ENCODE measurements at regions of chr7 and their contacts with region 1.

Region 1: GRCh38 chr7:115679976-115680375 is 350.6 kb downstream of the TFEC start:
- DNase-seq: peak; percentile 45
- H3K4me3 ChIP-seq: no peak overlapping the region
- H3K27ac ChIP-seq: no peak overlapping the region
- H3K4me1 ChIP-seq: no peaks in the 10 kb centered on the region
- H3K27me3 ChIP-seq: no peaks in the 10 kb centered on the region
- CTCF ChIP-seq: peak; percentile 19 to 55
- POLR2A ChIP-seq: no peak

Region 2: GRCh38 chr7:114026486-114027089 is 1653.4 kb before region 1 on chr7:
- CTCF ChIA-PET with region 1: interaction called, 8 read pairs
- POLR2A ChIA-PET with region 1: no interaction called
- dilution Hi-C with region 1: no loop called
- intact Hi-C with region 1: loop called (anchors 5 kb)
- DNase-seq: peak; percentile 64
- H3K4me3 ChIP-seq: no peak overlapping the region
- H3K27ac ChIP-seq: no peak overlapping the region
- H3K4me1 ChIP-seq: no peaks in the 10 kb centered on the region
- H3K27me3 ChIP-seq: no peaks in the 10 kb centered on the region
- CTCF ChIP-seq: peak; percentile 24 to 36
- POLR2A ChIP-seq: no peak

Region 3: GRCh38 chr7:115356139-115356746 is 323.7 kb before region 1 on chr7:
- CTCF ChIA-PET with region 1: interaction called, 4 read pairs
- POLR2A ChIA-PET with region 1: no interaction called
- dilution Hi-C with region 1: no loop called
- intact Hi-C with region 1: loop called (anchors 5 kb)
- DNase-seq: peak; percentile 16
- H3K4me3 ChIP-seq: no peak overlapping the region
- H3K27ac ChIP-seq: no peak overlapping the region
- H3K4me1 ChIP-seq: no peaks in the 10 kb centered on the region
- H3K27me3 ChIP-seq: no peaks in the 10 kb centered on the region
- CTCF ChIP-seq: peak; percentile 24 to 43
- POLR2A ChIP-seq: no peak

Region 4: DNA sequence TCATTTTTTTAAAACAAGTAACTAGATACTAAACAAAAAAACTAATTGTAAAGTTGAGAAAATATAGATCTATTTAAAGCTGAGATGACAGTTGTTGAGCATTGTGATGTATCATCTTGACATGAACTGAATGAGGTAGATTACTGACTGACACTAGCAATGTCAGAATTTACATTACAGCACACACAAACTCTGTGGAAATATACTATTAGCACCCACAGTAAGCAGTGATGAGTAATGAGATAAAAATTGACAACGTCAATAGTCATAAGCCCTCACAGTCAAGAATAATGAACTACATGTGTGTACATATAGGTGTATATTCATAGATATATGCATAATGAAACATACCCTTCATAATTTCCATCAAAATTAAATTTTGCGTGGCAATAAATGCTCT is 17.9 kb before region 1 on chr7:
- CTCF ChIA-PET with region 1: interaction called, 10 read pairs
- POLR2A ChIA-PET with region 1: no interaction called
- dilution Hi-C with region 1: no loop called
- intact Hi-C with region 1: no loop called
- DNase-seq: no peak
- H3K4me3 ChIP-seq: no peak overlapping the region
- H3K27ac ChIP-seq: no peak overlapping the region
- H3K4me1 ChIP-seq: no peaks in the 10 kb centered on the region
- H3K27me3 ChIP-seq: no peaks in the 10 kb centered on the region
- CTCF ChIP-seq: no peak
- POLR2A ChIP-seq: no peak

Region 5: DNA sequence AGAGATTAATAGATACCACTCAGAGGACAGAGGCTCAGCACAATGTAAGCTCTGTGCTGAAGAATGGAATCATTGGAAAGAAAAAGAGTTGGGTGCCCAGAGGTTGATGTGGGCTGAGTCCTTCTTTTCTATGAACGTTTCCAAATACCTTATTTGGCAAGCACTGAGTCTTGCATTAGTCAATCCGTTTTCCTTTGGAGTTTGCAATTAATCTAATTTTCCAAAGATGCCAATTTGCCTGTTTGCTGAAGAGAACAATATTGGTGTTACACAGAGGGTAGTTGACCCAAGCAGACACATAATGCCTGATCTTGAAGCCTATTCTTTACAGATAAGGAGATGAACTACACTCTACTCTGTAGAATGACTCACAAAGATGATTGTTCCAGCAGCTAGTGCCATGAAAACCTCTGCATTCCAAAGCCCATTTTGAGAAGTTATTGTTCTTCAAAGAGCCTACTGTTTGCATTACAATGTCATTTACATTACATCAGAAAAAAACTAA is 936.6 kb after region 1 on chr7:
- CTCF ChIA-PET with region 1: no interaction called
- POLR2A ChIA-PET with region 1: no interaction called
- dilution Hi-C with region 1: no loop called
- intact Hi-C with region 1: no loop called
- DNase-seq: peak; percentile 91
- H3K4me3 ChIP-seq: no peak overlapping the region
- H3K27ac ChIP-seq: peak overlapping the region; percentile 87
- H3K4me1 ChIP-seq: peaks cover 35% of the 10 kb centered on the region
- H3K27me3 ChIP-seq: no peaks in the 10 kb centered on the region
- CTCF ChIP-seq: no peak
- POLR2A ChIP-seq: no peak